GM18951 (cell line): ENCODE measurements at regions of chr1 and their contacts with region 1.

Region 1: GRCh38 chr1:233440951-233441401 is 113.5 kb downstream of the MAP3K21 start:
- POLR2A ChIP-seq: no peak

Region 2: GRCh38 chr1:233790662-233791375 is 349.8 kb after region 1 on chr1:
- in situ Hi-C with region 1: loop called (anchors 25 kb)
- POLR2A ChIP-seq: no peak

Region 3: DNA sequence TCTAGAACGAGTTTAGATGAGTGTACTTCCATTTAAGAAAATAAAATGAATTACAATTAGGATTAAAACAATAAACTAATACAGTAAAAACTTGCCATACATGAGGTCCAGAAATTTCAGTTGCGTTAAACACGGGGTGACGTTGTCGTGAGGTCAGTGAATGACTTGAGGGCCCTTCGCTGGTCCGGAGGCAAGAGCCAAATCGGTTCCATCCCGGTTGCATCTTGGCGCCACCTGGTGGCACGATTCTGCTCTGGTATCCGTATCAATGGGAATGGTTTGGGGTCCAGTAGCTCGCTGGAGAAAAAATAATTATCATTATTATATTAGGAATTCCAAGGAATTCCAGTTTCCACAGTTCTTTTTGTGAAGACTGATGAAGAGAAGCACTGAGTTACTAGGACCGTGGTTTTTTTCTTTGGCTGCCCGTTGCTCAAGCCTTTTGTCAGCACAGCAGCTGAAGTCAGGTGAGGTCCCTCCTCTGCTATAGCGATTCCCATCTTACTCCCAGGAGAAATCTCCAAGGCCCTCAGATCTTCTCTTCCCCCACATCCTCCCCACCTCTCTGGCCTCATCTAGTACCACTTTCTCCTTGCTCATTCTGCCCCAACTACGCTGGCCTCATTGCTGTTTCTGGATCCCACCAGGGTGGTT is 624.9 kb after region 1 on chr1:
- in situ Hi-C with region 1: loop called (anchors 25 kb)
- POLR2A ChIP-seq: no peak